ENCODE measurements at regions of chr11 and their contacts with region 1.

Region 1: DNA sequence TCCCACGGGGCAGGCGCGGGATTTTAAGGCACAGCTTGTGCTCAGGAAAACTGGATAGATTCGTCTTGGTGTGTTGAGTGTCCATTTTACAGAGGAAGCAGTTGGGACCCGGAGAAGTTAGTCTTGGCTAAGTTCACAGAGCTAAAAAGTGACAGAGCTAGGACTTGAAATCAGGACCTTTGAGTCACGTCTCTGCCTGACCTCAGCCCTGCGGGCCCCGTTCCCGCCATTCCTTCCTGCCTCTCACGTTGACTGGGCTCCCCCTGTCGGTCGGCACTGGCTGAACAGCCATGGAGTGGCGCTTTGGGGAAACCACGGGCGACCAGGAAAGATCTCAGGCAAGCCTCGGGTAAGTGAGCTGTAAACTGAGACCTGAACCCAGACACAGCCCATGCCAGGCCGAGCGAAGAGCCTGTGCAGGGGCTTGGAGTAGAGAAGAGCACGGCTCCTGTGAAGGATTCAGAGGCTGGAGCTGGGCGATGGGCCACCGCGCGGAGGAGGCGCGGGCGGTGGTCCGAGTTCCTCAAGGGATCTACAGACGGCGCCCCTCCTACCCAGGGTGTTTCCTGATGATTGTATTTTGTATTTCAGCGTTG is 54.1 kb downstream of the WNT11 start:
- DNase-seq: peak; percentile 96
- H3K4me3 Mint-ChIP-seq: peak overlapping the region; percentile 63
- H3K27ac Mint-ChIP-seq: peak overlapping the region; percentile 57
- H3K4me1 Mint-ChIP-seq: peaks cover 16% of the 10 kb centered on the region
- H3K27me3 Mint-ChIP-seq: peaks cover 22% of the 10 kb centered on the region

Region 2: DNA sequence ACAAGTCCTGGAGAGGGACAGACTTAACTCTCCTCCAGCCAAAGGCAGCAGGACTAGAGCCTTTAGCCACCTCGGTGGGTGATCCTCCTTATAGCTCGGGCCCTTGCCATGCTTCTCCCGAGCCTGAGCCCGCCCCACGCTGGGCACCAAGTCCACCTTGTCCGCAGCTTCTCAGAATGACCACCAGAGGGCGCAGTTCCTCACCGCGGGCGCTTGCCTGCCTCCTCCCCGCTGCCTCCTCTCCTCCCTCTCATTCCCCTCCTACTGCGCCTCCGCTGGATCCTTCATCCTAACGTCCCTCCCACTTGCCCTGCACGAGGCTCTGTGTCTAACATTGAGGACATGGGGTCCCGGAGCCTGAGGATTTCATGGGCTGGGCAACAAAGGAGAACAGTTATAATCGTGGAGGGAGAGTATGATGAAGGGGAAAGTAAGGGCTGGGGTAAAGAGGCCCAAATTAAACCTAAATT is 445.9 kb before region 1 on chr11:
- CTCF ChIA-PET with region 1: interaction called, 8 read pairs
- intact Hi-C with region 1: loop called (anchors 1 kb)
- DNase-seq: peak; percentile 75
- H3K4me3 Mint-ChIP-seq: no peak overlapping the region
- H3K27ac Mint-ChIP-seq: no peak overlapping the region
- H3K4me1 Mint-ChIP-seq: peaks cover 5% of the 10 kb centered on the region
- H3K27me3 Mint-ChIP-seq: no peaks in the 10 kb centered on the region

Region 3: DNA sequence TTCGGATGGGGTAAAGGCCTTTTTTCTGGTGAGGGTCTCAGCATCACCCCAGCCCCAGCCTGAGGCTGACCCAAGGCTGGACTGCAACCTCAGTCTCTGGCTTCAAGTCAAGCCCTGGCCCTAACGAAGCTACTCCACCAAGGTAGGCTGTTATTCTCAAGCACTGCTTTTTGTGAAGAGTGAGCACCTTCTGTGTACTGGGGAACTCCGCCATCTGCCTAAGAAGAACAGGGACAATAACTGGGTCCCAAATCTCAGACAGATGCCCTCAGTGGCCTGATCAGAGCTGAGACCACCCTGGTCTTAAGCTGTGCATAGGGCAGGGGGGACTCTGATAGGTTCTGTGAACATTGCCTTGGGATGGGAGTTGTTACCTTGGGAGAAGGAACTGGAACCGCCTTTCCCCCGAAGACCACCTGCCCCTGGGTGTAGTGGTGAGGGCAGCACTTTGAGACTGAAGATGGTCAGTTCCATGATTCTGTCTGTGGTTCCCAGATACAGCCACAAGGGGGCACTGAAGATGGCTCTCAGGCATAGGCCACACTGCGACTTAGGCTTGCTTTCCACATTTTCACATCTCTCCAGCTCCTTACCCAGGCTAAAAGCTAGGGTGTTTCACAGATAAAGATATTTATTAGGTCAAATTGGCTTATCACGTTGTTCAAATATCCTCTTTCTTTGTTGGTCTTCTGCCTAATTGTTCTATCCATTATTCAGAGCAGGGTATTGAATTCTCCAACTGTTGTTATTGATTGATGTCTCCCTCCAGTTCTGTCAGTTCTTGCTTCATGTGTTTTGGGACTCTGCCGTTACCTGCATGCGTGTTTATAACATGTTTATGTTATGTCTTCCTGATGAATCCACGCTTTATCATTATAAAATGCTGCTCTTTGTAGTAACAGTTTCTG is 349.0 kb before region 1 on chr11:
- CTCF ChIA-PET with region 1: interaction called, 14 read pairs
- intact Hi-C with region 1: loop called (anchors 1 kb)
- DNase-seq: peak; percentile 85
- H3K4me3 Mint-ChIP-seq: no peak overlapping the region
- H3K27ac Mint-ChIP-seq: no peak overlapping the region
- H3K4me1 Mint-ChIP-seq: peaks cover 12% of the 10 kb centered on the region
- H3K27me3 Mint-ChIP-seq: no peaks in the 10 kb centered on the region

Region 4: DNA sequence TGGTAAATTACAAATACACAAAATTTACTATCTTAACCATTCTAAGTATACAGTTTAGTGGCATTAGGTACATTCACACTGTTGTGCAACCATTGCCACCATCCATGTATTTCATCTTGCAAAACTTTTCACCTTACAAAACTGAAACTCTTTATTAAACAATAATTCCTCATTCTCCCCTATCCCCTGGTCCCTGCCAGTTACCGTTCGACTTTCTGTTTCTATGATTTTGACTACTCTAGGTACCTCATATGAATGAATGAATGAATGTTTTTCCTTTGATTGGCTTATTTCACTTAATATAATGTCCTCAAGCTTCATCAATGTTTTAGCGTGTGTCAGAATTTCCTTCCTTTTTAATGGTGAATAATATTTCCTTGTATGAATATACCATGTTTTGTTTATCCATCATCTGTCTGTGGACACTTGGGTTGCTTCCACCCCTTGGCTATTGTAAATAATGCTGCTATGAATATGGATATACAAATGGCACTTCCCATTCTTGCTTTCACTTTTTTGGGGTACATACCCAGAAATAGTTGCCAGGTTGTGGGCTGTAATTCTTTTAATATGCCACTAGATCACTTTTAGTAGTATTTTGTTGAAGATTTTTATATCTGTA is 244.2 kb before region 1 on chr11:
- CTCF ChIA-PET with region 1: interaction called, 23 read pairs
- intact Hi-C with region 1: no loop called
- DNase-seq: no peak
- H3K4me3 Mint-ChIP-seq: no peak overlapping the region
- H3K27ac Mint-ChIP-seq: no peak overlapping the region
- H3K4me1 Mint-ChIP-seq: peaks cover 19% of the 10 kb centered on the region
- H3K27me3 Mint-ChIP-seq: no peaks in the 10 kb centered on the region

Region 5: DNA sequence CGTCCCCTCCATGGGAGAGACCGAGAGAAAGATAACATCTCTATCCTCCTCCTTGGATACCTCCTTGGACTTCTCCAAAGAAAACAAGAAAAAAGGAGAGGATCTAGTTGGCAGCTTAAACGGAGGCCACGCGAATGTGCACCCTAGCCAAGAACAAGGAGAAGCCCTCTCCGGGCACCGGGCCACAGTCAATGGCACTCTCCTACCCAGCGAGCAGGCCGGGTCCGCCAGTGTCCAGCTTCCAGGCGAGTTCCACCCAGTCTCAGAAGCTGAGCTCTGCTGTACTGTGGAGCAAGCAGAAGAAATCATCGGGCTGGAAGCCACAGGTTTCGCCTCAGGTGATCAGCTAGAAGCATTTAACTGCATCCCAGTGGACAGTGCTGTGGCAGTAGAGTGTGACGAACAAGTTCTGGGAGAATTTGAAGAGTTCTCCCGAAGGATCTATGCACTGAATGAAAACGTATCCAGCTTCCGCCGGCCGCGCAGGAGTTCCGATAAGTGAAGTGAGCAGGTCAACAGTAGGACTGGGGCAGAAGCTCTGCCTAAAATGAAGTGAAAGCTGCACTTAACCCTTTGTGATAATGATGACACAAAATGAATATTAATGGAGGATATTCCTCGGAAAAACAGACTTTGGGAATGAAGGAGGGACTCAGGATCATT is 11.1 kb before region 1 on chr11:
- CTCF ChIA-PET with region 1: interaction called, 10 read pairs
- intact Hi-C with region 1: no loop called
- DNase-seq: no peak
- H3K4me3 Mint-ChIP-seq: no peak overlapping the region
- H3K27ac Mint-ChIP-seq: no peak overlapping the region
- H3K4me1 Mint-ChIP-seq: no peaks in the 10 kb centered on the region
- H3K27me3 Mint-ChIP-seq: no peaks in the 10 kb centered on the region

Region 6: GRCh38 chr11:76680518-76681425 is 528.6 kb after region 1 on chr11:
- CTCF ChIA-PET with region 1: no interaction called
- intact Hi-C with region 1: no loop called
- DNase-seq: peak; percentile 80
- H3K4me3 Mint-ChIP-seq: no peak overlapping the region
- H3K27ac Mint-ChIP-seq: no peak overlapping the region
- H3K4me1 Mint-ChIP-seq: peaks cover 2% of the 10 kb centered on the region
- H3K27me3 Mint-ChIP-seq: peaks cover 5% of the 10 kb centered on the region

Measured in activated naive CD4-positive, alpha-beta T cell treated with anti-CD3 and anti-CD28 coated beads for 36 hours (primary cell).